ENCODE measurements at regions of chr1 and their contacts with region 1.

Region 1: DNA sequence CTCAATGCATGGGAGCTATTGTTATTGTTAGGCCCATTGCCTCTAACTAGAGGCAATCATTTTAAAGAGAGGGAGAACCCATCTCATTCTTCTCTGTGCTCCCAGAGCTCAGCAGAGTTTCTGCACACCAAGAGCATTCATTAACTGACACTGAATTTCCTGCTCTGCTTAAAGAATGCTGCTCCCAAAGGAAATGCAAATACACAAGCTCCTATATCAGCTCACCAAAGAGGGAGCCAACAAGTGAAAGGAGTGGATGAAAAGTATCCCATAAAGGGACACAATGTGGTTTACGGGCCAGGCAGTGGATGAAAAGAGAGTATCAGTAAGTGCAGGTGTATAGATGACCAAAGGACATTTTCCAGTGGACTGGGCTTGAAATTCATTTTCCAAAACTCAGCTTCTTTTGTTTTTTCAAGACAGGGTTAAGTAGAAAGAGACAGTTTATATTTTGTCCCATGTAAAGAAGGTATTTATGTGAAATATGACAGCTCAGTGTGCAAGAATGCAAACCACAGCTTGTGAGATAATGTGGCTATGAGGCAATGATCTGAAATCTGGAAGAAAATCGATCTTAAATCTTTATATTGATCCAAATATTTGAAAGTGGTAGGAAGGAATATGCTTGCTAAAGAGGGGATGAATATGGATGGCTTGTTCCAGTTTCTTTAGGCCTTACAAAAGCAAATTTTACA is 207.7 kb upstream of the CAMK1G start:
- DNase-seq: no peak
- ATAC-seq: no peak
- H3K4me3 ChIP-seq: no peak overlapping the region
- H3K27ac ChIP-seq: no peak overlapping the region
- H3K4me1 ChIP-seq: peaks cover 0 to 8% of the 10 kb centered on the region in 2 experiments; a peak in 1 of 4 replicates
- H3K27me3 ChIP-seq: no peaks in the 10 kb centered on the region
- CTCF ChIP-seq: no peak
- POLR2A ChIP-seq: no peak
- RAD21 ChIP-seq: no peak

Region 2: DNA sequence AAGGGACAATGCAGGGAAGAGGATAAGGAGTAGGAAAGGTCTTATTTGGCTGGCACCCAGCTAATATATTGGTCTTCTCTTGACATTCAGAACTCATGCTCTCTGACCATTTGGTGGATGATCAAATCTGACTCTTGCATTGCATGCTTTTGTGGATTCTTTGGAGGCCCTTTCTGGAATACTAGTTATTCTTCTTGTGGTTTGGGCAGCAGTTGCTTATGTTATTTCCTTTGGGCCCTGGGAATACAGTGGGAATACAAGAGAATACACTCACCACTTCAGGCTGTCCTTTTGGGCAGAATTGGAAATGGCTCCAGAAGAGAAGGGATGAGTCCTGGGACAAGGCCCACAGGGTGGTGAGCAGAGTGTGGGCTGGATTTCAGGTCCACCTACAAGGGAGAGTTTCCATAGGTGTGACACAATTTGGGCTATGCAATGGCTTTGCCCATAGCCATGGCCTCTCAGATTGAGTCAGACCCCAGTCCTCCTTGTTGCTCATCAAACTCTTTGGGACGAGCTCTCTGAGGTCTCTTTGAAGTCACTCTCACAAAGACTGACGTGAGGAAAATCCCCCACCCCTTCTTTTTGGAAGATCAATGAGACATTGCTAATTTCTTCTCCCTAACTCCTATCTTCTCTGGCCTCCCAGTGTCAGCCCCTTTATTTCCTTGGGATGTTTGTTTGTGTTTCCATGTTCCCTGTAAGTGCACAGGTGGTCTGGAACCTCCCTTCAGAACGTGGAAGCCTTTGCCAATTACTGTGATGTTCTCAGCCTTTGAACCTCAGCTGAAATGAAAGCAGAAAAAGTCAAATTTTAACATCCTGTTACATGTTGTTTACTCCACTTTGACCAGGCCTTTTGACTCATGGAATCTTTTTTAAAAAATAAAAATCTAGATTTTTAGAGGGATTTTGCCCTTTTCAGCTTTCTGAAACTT is 348.2 kb after region 1 on chr1:
- CTCF ChIA-PET with region 1: no interaction called
- POLR2A ChIA-PET with region 1: no interaction called
- RAD21 ChIA-PET with region 1: no interaction called
- intact Hi-C with region 1: loop called (anchors 10 kb)
- DNase-seq: no peak
- ATAC-seq: no peak
- H3K4me3 ChIP-seq: no peak overlapping the region
- H3K27ac ChIP-seq: no peak overlapping the region
- H3K4me1 ChIP-seq: no peaks in the 10 kb centered on the region
- H3K27me3 ChIP-seq: no peaks in the 10 kb centered on the region
- CTCF ChIP-seq: no peak
- POLR2A ChIP-seq: no peak
- RAD21 ChIP-seq: no peak

Measured in HCT116 (cell line).